OCI-LY7 (cell line): ENCODE measurements at regions of chr1 and their contacts with region 1.

Region 1: DNA sequence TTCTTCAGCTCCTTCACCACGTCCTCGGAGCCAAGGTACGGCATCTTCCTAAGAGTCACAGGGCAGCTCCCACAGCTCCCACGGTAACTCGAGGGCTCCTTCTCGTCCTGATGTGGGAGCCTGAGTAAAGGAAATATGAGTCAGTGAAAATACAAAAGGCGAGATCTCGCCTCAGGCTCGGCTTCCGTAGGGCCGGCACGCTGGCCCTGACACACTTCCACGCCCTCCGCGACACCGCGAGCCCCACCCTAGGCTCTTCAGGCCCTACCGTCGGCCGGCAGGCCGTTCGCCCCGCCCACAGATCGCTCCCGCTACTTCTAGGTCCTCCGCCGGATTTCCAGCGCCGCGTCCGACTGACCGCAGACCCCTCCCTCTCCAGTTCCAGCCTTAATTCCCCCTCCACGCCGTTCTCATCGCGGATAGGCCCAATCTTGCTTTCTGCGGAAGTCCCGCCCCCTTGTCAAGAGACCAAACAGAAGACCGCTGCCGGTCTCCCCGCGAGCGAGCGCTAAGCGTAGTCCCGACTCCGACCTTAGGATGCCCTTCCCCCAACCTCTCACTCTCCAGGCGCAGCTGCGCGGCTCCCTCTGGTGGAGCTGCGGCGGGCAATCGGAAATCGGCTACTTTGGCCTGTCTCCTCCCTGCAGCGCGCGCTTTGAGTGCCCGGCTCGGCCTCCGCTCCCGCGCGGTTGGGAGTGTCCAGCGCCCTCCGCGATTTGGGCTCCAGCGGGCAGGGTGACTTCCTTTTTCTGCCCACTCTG is at the starts of genes AP4B1 and DCLRE1B:
- DNase-seq: peak; percentile 100
- H3K4me3 ChIP-seq: peak within 1 kb of the TSS; percentile 99
- H3K27ac ChIP-seq: peak within 1 kb of the TSS; percentile 77
- H3K4me1 ChIP-seq: peaks cover 27% of the 10 kb centered on the region
- CTCF ChIP-seq: peak; percentile 71
- total RNA-seq, gene AP4B1: 37.7 and 45.3 TPM in 2 replicates
- total RNA-seq, gene DCLRE1B: 17.3 and 20.1 TPM in 2 replicates

Region 2: GRCh38 chr1:113811888-113812660 is 92.8 kb before region 1 on chr1 and contains the start of gene RSBN1:
- CTCF ChIA-PET with region 1: no interaction called
- POLR2A ChIA-PET with region 1: interaction called, 5 read pairs
- intact Hi-C with region 1: loop called (anchors 1 kb)
- DNase-seq: peak; percentile 99
- H3K4me3 ChIP-seq: peak within 1 kb of the TSS; percentile 84
- H3K27ac ChIP-seq: peak within 1 kb of the TSS; percentile 93
- H3K4me1 ChIP-seq: peaks cover 30% of the 10 kb centered on the region
- CTCF ChIP-seq: no peak
- total RNA-seq, gene RSBN1: 10.8 and 12.5 TPM in 2 replicates

Region 3: DNA sequence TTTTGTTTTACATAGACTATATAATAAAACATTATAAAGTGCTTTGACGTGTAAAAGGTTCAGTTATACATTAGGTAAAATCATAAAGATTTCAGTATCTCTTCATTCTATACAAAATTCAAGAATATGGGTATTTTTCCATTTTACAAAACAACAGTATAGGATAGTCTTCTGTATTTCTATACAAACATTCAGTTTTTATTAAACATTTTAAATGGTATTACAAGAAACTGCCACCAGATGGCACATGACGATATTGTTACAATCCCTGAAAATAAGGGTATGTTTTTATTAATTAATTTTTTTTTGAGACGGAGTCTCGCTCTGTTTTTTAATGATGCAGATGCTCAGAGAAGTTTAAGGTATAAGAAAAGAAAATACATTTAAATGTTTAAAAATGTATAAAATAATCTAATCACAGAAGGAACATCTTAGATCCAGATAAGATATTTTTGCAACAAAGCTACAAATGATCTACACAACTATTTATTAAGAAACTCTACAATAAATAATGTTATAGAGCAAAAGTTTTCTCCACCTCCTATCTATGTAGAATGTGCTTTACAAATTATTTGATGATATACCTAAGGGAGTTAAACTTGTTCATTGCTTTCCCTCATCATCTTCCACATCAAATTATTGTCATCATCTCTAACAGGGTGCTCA is 69.1 kb before region 1 on chr1:
- CTCF ChIA-PET with region 1: no interaction called
- POLR2A ChIA-PET with region 1: interaction called, 4 read pairs
- intact Hi-C with region 1: loop called (anchors 1 kb)
- DNase-seq: peak; percentile 71
- H3K4me3 ChIP-seq: no peak overlapping the region
- H3K27ac ChIP-seq: no peak overlapping the region
- H3K4me1 ChIP-seq: no peaks in the 10 kb centered on the region
- CTCF ChIP-seq: peak; percentile 91

Region 4: GRCh38 chr1:113859478-113860175 is 45.2 kb before region 1 on chr1:
- CTCF ChIA-PET with region 1: no interaction called
- POLR2A ChIA-PET with region 1: interaction called, 7 read pairs
- intact Hi-C with region 1: loop called (anchors 1 kb)
- DNase-seq: peak; percentile 85
- H3K4me3 ChIP-seq: peak overlapping the region; percentile 58
- H3K27ac ChIP-seq: peak overlapping the region; percentile 94
- H3K4me1 ChIP-seq: peaks cover 70% of the 10 kb centered on the region
- CTCF ChIP-seq: no peak